ENCODE measurements at regions of chr15 and their contacts with region 1.

Region 1: DNA sequence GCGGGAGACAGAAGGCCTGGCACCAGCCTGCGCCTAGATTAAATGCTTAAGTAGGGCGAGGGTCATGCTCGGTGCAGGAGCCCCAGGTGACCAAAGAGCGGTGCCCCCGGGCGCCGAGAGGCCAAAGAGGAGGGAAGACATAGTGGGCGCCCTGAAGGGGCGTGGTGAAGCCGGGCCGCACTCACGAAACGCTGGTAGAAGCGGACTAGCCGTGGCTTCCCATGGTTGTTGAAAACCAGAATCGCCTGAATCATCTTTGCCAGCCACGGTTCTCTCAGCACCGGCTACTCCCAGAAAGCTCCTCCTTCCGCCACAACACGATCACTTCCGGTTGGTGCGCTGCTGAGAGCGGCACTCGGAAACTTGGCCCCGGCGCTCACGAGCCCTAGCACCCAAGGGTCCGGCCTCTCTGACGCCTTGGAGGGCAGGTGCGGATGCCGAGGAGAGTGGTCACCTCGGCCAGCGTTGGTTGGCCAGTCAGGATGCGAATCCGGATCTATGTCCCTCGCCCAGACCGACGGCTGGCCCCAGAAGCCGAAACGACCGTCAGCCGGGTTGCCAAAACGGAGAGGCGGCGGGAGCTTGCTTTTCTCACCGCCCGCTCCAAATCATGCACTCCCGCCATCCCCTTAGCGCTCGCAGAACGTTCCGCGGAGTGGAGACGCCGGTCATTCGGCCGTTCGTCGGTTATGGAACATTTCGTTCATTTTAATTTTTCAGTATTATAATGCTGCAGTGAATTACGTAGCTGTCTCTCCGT is at the start of gene AP3S2:
- DNase-seq: peak; percentile 96
- ATAC-seq: peak; percentile 88
- H3K4me3 ChIP-seq: peak within 1 kb of the TSS; percentile 81
- H3K27ac ChIP-seq: peak within 1 kb of the TSS; percentile 96
- H3K4me1 ChIP-seq: peaks cover 14% of the 10 kb centered on the region
- H3K27me3 ChIP-seq: no peaks in the 10 kb centered on the region
- CTCF ChIP-seq: no peak
- total RNA-seq, gene AP3S2: 18.8 and 19.4 TPM in 2 replicates

Region 2: DNA sequence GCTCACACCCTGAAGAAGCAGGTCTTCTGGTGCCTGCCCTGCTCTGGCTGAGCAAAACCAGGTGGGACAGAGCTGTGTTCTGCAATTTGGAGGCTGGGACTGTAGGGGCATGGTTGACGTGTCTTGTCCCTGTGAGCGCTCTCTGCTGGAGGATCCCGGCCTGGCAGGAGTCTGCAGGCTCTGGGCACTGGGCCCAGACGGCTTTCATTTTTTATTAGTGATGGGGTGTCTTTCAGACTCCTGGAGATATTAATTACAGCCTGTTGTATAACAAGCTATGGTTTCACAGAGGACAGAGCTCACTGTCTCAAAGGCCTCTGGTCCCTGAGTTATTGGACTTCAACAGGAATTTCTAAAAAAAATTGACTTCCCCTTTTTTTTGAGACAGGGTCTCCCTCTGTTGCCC is 77.7 kb after region 1 on chr15:
- CTCF ChIA-PET with region 1: interaction called, 3 read pairs
- POLR2A ChIA-PET with region 1: no interaction called
- intact Hi-C with region 1: loop called (anchors 1 kb)
- DNase-seq: peak; percentile 79
- ATAC-seq: peak; percentile 97
- H3K4me3 ChIP-seq: no peak overlapping the region
- H3K27ac ChIP-seq: no peak overlapping the region
- H3K4me1 ChIP-seq: no peaks in the 10 kb centered on the region
- H3K27me3 ChIP-seq: no peaks in the 10 kb centered on the region
- CTCF ChIP-seq: peak; percentile 79

Region 3: GRCh38 chr15:90001683-90002427 is 108.0 kb after region 1 on chr15:
- CTCF ChIA-PET with region 1: no interaction called
- POLR2A ChIA-PET with region 1: interaction called, 4 read pairs
- intact Hi-C with region 1: loop called (anchors 10 kb)
- DNase-seq: peak; percentile 43
- ATAC-seq: peak; percentile 9
- H3K4me3 ChIP-seq: peak overlapping the region; percentile 89
- H3K27ac ChIP-seq: peak overlapping the region; percentile 50
- H3K4me1 ChIP-seq: peaks cover 77% of the 10 kb centered on the region
- H3K27me3 ChIP-seq: no peaks in the 10 kb centered on the region
- CTCF ChIP-seq: no peak

Region 4: DNA sequence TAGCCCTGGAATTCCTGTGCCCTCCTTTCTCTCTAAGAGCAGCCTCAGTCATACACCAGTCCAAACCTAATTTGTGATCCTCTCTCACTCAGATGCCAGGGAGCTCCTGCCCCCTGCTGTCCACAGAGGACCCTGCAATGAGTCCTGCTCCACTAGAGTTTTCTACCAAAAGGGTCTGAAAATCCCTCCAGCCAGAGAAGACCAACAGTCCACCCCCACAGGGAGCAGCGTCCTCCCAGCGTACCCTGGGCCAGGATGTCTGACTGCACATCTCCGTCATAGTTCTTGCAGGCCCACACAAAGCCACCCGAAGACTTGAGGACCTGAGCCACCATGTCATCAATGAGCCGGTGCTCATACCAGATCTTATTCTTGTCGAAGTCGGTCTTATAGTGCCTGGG is 193.0 kb after region 1 on chr15:
- CTCF ChIA-PET with region 1: interaction called, 3 read pairs
- POLR2A ChIA-PET with region 1: no interaction called
- intact Hi-C with region 1: loop called (anchors 5 kb)
- DNase-seq: peak; percentile 68
- ATAC-seq: peak; percentile 80
- H3K4me3 ChIP-seq: no peak overlapping the region
- H3K27ac ChIP-seq: no peak overlapping the region
- H3K4me1 ChIP-seq: no peaks in the 10 kb centered on the region
- H3K27me3 ChIP-seq: no peaks in the 10 kb centered on the region
- CTCF ChIP-seq: peak; percentile 90

Region 5: DNA sequence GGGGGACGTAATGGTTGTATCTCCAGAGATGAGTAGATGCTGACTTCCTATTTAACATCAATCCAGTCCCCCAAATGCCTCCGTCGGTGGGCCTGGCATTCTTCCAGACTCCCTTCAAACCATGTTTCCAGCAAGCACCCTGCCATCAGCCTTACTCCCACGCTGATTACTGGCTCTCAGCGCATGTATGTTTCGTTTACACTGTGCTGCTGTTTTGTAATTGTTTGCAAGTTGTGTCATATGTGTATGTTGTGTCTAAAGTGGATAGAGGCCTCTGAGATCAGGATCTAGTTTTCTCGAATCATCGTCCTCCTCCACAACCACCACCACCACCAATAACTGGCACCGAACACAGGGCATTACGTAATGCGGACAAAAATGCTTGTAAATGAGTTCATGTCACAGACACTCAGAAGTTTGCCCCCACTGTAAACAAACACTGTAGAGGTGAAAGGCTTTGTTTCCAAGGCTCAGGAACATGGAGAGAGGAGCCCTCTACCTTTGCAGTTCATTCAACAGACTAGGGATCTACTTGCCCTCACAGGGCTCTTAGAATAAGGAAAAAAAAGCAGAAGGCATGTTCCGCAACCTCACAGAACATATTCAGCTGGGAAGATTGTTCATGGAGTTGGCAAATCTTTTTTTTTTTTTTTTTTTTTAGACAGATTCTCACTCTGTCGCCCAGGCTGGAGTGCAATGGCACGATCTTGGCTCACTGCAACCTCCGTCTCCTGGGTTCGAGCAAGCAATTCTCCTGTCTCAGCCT is 261.2 kb after region 1 on chr15:
- CTCF ChIA-PET with region 1: no interaction called
- POLR2A ChIA-PET with region 1: no interaction called
- intact Hi-C with region 1: no loop called
- DNase-seq: peak; percentile 97
- ATAC-seq: peak; percentile 58
- H3K4me3 ChIP-seq: no peak overlapping the region
- H3K27ac ChIP-seq: peak overlapping the region; percentile 76
- H3K4me1 ChIP-seq: peaks cover 38% of the 10 kb centered on the region
- H3K27me3 ChIP-seq: no peaks in the 10 kb centered on the region
- CTCF ChIP-seq: no peak

Measured in PC-3 (cell line).